ENCODE measurements at regions of chr4 and their contacts with region 1.

Region 1: GRCh38 chr4:77697860-77698590 is 92.4 kb downstream of the CXCL13 start:
- ATAC-seq: peak in 6 of 8 experiments; percentile 15 to 73 (median 56)
- H3K4me3 ChIP-seq: no peak overlapping the region
- H3K27ac ChIP-seq: no peak overlapping the region
- H3K4me1 ChIP-seq: peaks cover 10 to 18% of the 10 kb centered on the region in 2 donors

Region 2: DNA sequence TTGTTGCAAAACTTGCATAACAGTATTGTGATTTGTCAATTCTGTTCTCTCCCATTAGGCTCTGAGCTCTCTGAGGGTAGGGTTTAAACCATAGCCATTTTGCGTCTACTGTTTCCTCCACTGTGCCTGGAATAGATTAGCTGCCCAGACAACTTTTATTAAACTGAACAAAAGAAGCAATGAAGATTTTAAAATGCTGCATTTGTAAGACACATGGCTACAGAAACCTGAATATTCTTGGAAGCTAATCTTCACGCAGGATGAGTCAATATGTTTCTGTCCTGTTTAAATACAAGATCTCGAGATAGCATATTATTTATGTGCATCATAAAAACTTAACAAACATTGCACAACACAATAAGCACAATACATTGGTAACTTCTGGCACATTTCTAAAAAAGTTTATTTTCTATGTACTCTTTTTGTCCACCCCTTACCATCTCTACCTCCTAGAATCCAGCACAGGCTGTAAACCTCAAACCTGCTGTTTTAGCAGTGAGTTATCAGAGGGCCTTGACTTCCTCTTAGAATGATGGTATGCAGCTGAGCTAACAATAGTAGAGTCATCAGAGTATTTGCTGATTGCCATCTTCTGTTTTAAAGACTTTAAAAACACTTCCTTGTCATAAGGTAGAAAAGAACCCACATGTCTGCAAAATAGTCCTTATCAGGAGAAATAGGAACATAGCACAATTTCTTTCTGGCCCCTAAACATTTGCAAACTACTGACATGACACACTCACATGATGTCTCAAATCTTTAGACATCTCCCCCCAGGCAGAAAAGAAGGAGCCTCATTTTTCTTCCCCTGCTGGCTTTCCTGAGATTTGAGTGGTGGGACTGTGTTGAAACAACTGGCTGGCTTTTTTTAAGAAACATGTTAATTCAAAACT is 551.6 kb before region 1 on chr4:
- in situ Hi-C with region 1: no loop called
- ATAC-seq: peak in 7 of 8 experiments; percentile 35 to 83 (median 53)
- H3K4me3 ChIP-seq: no peak overlapping the region
- H3K27ac ChIP-seq: no peak overlapping the region
- H3K4me1 ChIP-seq: peaks cover 0 to 7% of the 10 kb centered on the region in 2 donors

Region 3: GRCh38 chr4:77629885-77630284 is 68.1 kb before region 1 on chr4:
- in situ Hi-C with region 1: loop called in 1 of 9 experiments (anchors 10 kb)
- ATAC-seq: no peak
- H3K4me3 ChIP-seq: no peak overlapping the region
- H3K27ac ChIP-seq: no peak overlapping the region
- H3K4me1 ChIP-seq: no peaks in the 10 kb centered on the region

Measured in motor neuron (in vitro differentiated cells).